PC-3 (cell line): ENCODE measurements at regions of chr5 and their contacts with region 1.

Region 1: DNA sequence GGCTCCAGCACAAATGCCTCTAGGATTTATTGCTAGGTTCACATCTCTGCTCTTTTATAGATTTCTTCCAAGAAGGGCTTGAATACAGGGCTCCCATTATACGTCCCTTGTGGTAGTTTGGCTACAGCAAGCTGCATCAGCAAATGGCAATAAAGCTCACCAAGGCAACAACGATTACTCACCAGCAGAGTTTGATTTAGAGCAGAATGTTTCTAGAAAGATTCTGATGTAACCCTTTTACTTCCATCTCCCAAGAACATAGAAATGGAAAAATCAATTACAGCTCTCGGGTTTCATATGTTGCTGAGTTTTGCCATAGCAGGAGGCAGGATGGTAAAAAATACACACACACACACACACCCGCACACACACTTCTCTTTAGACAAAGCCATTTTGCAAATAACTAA is 124.2 kb upstream of the TNPO1 start:
- DNase-seq: no peak
- ATAC-seq: peak; percentile 37; the same call in 1 of the 2 replicates
- H3K4me3 ChIP-seq: no peak overlapping the region
- H3K27ac ChIP-seq: no peak overlapping the region
- H3K4me1 ChIP-seq: no peaks in the 10 kb centered on the region
- H3K27me3 ChIP-seq: no peaks in the 10 kb centered on the region
- CTCF ChIP-seq: no peak

Region 2: DNA sequence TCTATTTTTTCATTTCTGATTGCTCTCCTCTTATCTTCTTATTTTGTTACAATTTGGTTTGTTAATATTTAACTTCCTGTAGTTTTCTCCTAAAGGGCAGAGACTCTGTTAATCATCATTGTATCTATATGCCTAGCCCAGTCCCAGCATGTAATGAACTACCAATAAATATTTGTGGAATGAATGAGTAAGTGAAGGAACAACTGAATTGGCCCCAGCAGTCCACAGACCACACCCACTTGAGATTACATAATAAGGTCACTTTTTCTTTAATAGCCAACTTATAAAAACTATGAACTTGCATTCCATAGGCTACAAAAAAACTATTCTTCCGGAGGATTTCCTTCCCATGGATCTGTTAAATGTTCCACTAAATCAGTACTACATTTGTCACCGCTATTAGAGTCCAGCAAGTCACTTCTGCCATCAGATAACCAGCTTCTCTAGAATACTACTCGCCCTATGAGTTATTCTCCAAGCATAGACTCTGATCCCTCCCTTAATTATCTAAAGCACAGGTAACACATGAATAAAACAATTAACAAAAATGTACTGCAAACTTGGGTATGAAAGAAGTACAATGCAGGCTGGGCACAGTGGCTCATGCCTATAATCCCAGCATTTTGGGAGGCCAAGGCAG is 96.8 kb after region 1 on chr5:
- CTCF ChIA-PET with region 1: no interaction called
- POLR2A ChIA-PET with region 1: no interaction called
- intact Hi-C with region 1: loop called (anchors 10 kb)
- DNase-seq: peak; percentile 82
- ATAC-seq: peak; percentile 97
- H3K4me3 ChIP-seq: no peak overlapping the region
- H3K27ac ChIP-seq: peak overlapping the region; percentile 73
- H3K4me1 ChIP-seq: peaks cover 21% of the 10 kb centered on the region
- H3K27me3 ChIP-seq: no peaks in the 10 kb centered on the region
- CTCF ChIP-seq: no peak